ENCODE measurements at regions of chr9 and their contacts with region 1.

Region 1: GRCh38 chr9:129413537-129414376 is 207.1 kb downstream of the C9orf50 start:
- DNase-seq: peak; percentile 99

Region 2: GRCh38 chr9:129174085-129174723 is 239.6 kb before region 1 on chr9:
- intact Hi-C with region 1: loop called (anchors 2 kb)
- DNase-seq: peak; percentile 95

Region 3: DNA sequence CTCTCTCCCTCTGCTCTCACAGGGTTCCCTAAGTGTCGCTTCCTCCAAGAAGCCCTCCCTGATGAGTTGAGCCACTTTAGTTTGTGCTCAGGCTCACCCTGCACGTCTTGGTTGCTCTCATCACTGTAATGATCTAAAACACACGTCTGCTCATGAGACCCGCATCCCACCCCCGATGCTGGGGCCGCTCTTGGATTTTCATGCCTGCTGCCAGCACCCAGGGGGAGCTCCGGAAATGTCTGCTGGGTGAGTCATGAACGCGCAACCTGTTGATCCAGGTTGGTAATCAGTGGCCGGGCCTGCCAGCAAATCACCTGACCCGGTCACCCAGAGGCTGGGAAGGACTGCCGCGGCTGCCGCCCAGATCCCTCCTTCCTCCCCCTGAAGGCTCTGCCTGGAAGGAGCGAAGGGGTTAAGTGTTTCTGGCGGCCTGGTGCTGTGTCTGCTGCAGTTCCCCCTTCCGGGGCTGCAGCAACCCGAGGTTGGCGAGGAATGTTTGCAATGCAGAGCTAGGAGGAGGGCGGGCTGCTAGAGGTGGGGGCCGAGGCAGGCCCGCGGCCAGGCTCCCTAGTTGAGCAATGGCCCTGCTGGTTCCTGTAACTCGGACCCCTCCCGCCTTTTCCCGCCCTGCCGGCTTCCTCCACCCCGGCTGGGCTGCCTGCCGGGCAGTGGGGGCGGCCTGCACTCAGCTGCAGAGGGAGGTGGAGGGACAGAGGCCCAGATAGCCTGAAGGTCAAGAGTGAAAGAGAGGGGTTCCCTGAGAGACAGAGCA is 79.6 kb before region 1 on chr9:
- intact Hi-C with region 1: loop called (anchors 5 kb)
- DNase-seq: peak; percentile 96

Region 4: DNA sequence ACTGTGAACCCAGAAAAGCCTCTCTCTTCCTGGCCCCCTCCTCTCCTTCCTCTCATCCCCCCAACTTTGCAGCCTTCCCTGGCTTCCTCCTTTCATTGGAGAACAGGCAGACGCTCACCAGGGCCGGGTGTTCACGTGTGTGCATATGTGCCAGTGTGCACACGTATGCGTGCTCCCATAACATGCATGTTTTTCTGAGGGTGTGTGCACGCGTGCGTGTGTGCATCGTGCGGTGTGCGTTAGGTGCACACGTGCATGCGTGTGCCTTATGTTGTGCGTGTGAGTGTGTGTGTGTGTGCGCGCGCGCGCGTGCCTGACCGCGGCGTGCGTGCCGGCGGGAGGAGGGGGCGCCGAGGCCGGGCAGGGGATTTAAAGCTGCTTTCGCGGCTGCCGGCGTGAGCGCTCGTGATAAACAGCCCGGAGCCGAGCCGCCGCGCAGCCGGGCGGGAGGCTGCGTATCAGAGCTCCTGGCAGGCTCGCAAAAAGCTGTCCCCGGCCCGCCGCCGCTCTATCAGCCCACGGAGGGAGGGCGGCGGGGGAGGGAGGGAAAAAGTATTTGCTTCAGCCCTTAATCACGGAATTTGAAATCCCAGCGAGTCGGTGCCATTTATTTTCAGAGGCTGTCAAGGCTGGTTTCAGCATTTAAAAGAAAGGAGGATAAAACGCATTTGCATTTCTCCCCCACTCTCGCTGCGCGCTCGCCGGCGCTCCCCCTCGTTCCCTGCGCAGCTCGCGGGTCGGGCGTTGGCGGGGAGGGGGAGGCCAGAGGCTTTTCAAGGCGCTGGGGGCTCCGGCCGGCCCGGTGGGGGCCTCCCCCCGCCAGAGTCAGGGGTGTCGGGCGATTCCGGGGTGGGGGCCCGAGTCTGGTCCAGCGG is 23.2 kb after region 1 on chr9:
- intact Hi-C with region 1: loop called (anchors 1 kb)
- DNase-seq: no peak

Region 5: DNA sequence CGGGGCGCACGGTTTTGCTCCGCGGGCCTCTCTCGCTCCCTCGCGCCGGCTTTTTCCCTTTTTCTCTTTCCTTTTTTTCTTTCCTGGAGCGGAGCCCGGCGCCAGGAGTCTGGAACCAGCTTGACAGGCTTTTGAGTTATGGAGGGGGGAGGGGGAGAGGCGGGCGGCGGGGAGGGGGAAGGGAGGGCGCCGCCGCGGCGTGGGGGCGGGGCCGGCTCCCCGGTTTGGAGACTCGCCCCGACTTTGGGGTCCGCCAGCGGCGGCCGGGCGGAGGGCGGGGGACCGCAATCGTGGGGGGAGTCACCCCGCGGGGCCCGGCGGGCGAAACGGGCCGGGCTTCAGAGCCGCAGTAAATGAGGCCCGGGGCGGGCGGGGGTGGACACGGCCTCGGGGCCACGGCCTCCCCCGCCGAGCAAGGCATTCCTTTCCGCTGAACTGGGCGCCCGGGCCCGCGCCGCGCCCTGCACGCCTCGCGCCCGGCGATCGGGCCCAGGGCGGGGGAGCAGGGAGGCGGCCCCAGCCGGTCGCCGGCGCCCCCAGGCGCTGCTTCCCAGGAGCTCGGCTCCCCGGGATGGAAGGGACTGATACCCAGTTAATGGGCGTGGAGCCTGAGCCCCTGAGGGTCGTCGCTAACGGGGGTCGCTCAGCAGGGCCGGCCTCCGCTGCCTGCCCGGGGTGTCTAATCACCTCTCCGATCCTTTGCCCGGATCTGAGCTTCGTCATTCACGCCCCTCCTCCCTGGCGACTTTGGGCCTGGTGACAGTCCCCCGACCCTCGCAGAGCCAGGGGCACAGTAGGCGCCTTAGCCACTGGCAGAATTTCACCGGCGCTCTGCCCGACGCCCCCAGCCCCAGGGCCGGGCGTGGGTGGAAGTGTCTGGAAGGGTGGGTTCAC is 69.0 kb after region 1 on chr9:
- intact Hi-C with region 1: loop called (anchors 1 kb)
- DNase-seq: peak; percentile 89

Measured in cardiac septum (tissue), 1 donor.